Activated naive CD4-positive, alpha-beta T cell treated with anti-CD3 and anti-CD28 coated beads for 36 hours (primary cell): ENCODE measurements at regions of chr7 and their contacts with region 1.

Region 1: GRCh38 chr7:36291387-36292316 is 98.0 kb upstream of the ANLN start:
- DNase-seq: peak; percentile 79
- H3K4me3 Mint-ChIP-seq: peak overlapping the region; percentile 59
- H3K27ac Mint-ChIP-seq: no peak overlapping the region
- H3K4me1 Mint-ChIP-seq: peaks cover 24% of the 10 kb centered on the region
- H3K27me3 Mint-ChIP-seq: no peaks in the 10 kb centered on the region

Region 2: GRCh38 chr7:35985126-35985754 is 306.4 kb before region 1 on chr7:
- CTCF ChIA-PET with region 1: interaction called, 72 read pairs
- intact Hi-C with region 1: loop called (anchors 1 kb)
- DNase-seq: peak; percentile 85
- H3K4me3 Mint-ChIP-seq: no peak overlapping the region
- H3K27ac Mint-ChIP-seq: no peak overlapping the region
- H3K4me1 Mint-ChIP-seq: no peaks in the 10 kb centered on the region
- H3K27me3 Mint-ChIP-seq: no peaks in the 10 kb centered on the region

Region 3: GRCh38 chr7:36058020-36058592 is 233.5 kb before region 1 on chr7:
- CTCF ChIA-PET with region 1: no interaction called
- intact Hi-C with region 1: no loop called
- DNase-seq: no peak
- H3K4me3 Mint-ChIP-seq: no peak overlapping the region
- H3K27ac Mint-ChIP-seq: no peak overlapping the region
- H3K4me1 Mint-ChIP-seq: no peaks in the 10 kb centered on the region
- H3K27me3 Mint-ChIP-seq: no peaks in the 10 kb centered on the region

Region 4: DNA sequence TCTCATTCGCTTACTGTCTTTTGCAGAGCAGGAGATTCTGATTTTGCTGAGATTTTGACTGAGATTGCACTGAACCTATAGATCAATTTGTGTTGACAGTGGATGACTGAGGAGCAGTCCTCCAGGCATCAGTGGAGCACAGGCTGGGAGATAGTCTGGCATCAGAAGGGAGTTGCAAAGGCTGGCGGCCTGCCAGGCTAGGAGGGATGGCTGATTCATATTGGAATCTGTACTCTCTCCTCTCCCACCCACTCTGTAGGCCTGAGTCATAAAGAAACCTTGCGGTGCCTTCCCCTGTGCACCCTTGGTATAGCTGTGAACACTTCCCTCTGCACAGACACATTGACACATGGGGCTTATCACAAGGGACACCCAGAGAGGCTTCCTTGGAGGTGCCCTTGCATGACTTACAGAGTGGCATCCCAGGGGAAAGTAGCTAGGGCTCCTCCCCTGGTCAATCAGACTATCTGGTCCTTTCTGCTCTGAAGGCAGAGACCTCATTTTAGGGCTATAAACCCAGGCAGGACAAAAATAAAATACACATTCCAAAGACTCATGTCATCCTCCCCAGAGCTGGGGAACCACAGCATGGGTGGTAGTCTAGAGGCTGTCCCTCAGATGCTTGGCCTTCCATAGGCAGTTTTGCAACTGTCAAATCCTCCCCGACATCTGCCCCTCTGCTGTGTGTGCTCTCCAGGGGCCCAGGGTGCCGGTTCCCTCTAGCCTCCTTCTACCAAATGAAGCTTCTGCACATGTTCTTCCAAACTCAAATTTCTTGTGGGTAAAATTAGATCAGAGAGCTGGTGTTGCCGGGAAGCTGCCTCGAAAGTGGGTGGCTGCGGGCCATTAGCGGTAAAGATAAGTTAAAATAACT is 176.0 kb before region 1 on chr7:
- CTCF ChIA-PET with region 1: interaction called, 6 read pairs
- intact Hi-C with region 1: loop called (anchors 1 kb)
- DNase-seq: peak; percentile 96
- H3K4me3 Mint-ChIP-seq: no peak overlapping the region
- H3K27ac Mint-ChIP-seq: no peak overlapping the region
- H3K4me1 Mint-ChIP-seq: peaks cover 27% of the 10 kb centered on the region
- H3K27me3 Mint-ChIP-seq: peaks cover 8% of the 10 kb centered on the region

Region 5: GRCh38 chr7:36366718-36367560 is 75.3 kb after region 1 on chr7:
- CTCF ChIA-PET with region 1: interaction called, 5 read pairs
- intact Hi-C with region 1: loop called (anchors 2 kb)
- DNase-seq: peak; percentile 89
- H3K4me3 Mint-ChIP-seq: peak overlapping the region; percentile 86
- H3K27ac Mint-ChIP-seq: no peak overlapping the region
- H3K4me1 Mint-ChIP-seq: no peaks in the 10 kb centered on the region
- H3K27me3 Mint-ChIP-seq: peaks cover 2% of the 10 kb centered on the region